ENCODE measurements at regions of chr11 and their contacts with region 1.

Region 1: DNA sequence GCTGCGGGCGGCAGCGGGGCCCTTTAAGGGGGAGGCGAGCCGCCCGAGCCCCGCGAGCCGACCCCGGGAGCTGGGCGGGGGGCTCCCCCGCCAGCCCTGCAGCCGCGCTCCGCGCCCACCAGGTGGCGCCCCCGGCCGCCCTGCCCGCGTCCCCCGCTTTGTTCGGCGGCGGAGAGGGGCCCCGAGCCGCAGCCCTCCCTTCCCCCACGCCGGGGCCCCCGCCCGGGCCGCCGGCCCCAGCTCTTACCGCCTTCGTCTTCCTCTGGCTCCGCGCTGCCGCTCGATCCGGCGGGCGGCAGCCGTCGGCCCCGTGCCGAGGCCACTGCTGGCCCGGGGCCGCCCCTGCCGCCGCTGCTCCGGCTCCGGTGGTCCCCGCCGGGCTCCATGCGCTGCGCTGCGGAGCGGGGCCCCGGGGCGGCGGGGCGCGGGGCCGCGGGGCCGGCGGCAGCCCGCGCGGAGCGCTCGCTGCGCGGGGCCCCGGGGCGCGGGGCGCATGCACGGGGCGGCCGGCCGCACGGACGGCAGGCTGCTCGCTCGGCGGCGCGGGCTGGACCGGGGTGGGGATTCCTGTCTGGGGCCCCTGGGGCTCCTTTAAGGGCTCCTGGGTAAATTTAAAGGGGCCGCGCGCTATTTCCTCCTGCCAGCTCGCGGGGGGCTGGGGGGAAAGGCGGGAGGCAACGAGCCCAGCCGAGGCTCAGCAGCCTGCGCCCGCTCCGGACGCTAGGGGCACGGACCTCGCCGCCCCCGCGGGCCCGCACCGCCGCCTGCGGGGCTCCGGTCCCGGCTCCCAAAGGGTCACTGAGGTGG is at the start of gene ZFTA:
- DNase-seq: peak; percentile 57 to 70
- H3K4me3 ChIP-seq: peak within 1 kb of the TSS; percentile 73
- H3K27ac ChIP-seq: no peak within 1 kb of the TSS
- H3K4me1 ChIP-seq: peaks cover 11% of the 10 kb centered on the region; the same call in 1 of the 2 replicates
- H3K27me3 ChIP-seq: no peaks in the 10 kb centered on the region
- CTCF ChIP-seq: 0 out of 2 replicates have a peak, but pooled peaks have one; percentile 24
- total RNA-seq, gene ZFTA: 16.6 and 19.3 TPM in 2 replicates

Region 2: GRCh38 chr11:63802637-63803414 is 34.4 kb after region 1 on chr11:
- CTCF ChIA-PET with region 1: interaction called, 12 read pairs
- POLR2A ChIA-PET with region 1: interaction called, 4 read pairs
- intact Hi-C with region 1: loop called (anchors 2 kb)
- DNase-seq: peak; percentile 81 to 95
- H3K4me3 ChIP-seq: peak overlapping the region; percentile 25; the same call in 1 of the 2 replicates
- H3K27ac ChIP-seq: peak overlapping the region; percentile 89
- H3K4me1 ChIP-seq: peaks cover 46% of the 10 kb centered on the region
- H3K27me3 ChIP-seq: no peaks in the 10 kb centered on the region
- CTCF ChIP-seq: no peak

Region 3: DNA sequence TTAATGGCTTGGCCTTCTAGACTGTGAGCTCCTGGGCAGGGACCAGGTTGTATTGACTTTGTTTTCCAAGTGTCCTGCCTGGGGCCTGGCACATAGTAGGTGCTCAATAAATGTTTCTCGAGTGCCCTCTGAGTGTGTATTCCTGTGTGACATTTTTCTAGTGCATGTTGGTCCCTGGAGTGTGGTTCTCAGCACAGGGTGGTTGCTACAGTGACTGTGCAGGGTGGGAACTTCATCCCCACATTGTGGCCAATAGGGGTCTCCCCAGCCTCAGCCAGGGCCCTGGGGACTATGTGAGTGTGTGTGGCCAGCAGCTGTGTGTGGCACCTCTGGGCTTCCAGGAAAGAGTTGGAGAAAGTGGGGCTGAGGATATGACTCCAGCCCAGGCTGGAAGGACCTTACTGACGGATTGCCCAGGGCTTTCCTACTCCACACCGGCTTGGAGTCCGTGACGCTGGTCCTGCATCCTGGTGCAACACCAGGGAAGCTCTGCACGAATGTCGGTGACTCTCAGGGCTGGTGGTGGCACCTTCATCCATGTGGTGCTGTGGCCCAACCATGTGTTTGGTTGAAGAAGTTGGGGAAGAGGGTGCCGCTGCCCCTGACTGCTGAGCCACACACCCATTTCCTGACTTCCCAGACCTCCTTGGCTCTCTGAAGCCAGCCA is 61.5 kb after region 1 on chr11:
- CTCF ChIA-PET with region 1: interaction called, 11 read pairs
- POLR2A ChIA-PET with region 1: interaction called, 5 read pairs
- intact Hi-C with region 1: no loop called
- DNase-seq: peak in 1 of 2 experiments; percentile 28
- H3K4me3 ChIP-seq: no peak overlapping the region
- H3K27ac ChIP-seq: no peak overlapping the region
- H3K4me1 ChIP-seq: peaks cover 4% of the 10 kb centered on the region; the same call in 1 of the 2 replicates
- H3K27me3 ChIP-seq: no peaks in the 10 kb centered on the region
- CTCF ChIP-seq: peak; percentile 53; the same call in 1 of the 2 replicates

Region 4: DNA sequence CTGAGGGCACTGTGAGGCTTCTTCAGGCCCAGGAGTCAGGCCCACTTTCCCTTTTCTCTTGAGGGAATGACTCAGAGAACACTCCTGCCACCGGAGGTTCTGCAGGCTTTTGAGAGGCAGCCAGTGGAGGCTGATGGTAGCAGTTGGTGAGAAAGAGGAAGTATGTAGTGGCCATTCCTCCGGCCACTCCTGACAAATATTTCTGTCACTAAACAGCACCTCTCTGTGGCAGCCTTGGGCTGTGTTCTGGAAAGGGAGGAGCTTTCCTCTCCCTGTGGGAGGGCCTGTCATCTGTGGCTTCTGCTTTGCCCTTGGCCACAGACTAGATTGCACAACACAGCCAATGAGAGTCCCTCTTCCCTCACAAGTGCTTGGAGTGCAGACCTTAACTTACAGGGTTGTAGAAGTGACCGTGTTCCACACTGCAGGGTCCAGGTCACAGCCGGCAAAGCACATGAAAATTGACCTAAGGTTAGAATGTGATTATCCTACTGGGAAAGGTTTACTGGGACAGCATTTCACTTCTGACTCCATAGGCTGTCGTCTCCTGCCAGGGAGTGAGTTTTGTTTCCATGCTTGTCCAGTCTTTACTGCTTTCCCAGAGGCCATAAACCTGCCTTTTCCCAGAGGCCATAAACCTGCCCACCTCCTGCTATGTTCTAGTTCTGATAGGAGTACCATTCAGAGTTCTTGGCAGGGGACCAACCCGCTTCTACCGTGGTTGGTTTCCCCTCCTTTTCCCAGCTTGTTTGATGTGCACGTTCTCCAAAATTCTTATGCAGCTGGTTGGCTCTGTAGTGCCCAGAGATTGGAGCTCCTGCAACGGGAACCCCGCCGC is 103.7 kb after region 1 on chr11:
- CTCF ChIA-PET with region 1: no interaction called
- POLR2A ChIA-PET with region 1: no interaction called
- intact Hi-C with region 1: loop called (anchors 1 kb)
- DNase-seq: peak; percentile 93 to 99
- H3K4me3 ChIP-seq: peak overlapping the region; percentile 23; the same call in 1 of the 2 replicates
- H3K27ac ChIP-seq: peak overlapping the region; percentile 39
- H3K4me1 ChIP-seq: peaks cover 66% of the 10 kb centered on the region
- H3K27me3 ChIP-seq: no peaks in the 10 kb centered on the region
- CTCF ChIP-seq: peak; percentile 62

Region 5: GRCh38 chr11:64094463-64095260 is 326.2 kb after region 1 on chr11:
- CTCF ChIA-PET with region 1: no interaction called
- POLR2A ChIA-PET with region 1: interaction called, 12 read pairs
- intact Hi-C with region 1: no loop called
- DNase-seq: peak; percentile 84 to 86
- H3K4me3 ChIP-seq: no peak overlapping the region
- H3K27ac ChIP-seq: peak overlapping the region; percentile 27; the same call in 1 of the 2 replicates
- H3K4me1 ChIP-seq: peaks cover 50% of the 10 kb centered on the region
- H3K27me3 ChIP-seq: no peaks in the 10 kb centered on the region
- CTCF ChIP-seq: no peak; the same call in 1 of the 2 replicates

Measured in PC-9 (cell line).